MCF 10A (cell line): ENCODE measurements at regions of chr17 and their contacts with region 1.

Region 1: GRCh38 chr17:66200685-66201092 is 8.8 kb upstream of the CEP112 start:
- DNase-seq: peak; percentile 79
- H3K4me3 Mint-ChIP-seq: no peak overlapping the region
- H3K27ac Mint-ChIP-seq: no peak overlapping the region
- H3K4me1 Mint-ChIP-seq: peaks cover 6% of the 10 kb centered on the region
- H3K27me3 Mint-ChIP-seq: no peaks in the 10 kb centered on the region
- CTCF ChIP-seq: peak; percentile 64

Region 2: DNA sequence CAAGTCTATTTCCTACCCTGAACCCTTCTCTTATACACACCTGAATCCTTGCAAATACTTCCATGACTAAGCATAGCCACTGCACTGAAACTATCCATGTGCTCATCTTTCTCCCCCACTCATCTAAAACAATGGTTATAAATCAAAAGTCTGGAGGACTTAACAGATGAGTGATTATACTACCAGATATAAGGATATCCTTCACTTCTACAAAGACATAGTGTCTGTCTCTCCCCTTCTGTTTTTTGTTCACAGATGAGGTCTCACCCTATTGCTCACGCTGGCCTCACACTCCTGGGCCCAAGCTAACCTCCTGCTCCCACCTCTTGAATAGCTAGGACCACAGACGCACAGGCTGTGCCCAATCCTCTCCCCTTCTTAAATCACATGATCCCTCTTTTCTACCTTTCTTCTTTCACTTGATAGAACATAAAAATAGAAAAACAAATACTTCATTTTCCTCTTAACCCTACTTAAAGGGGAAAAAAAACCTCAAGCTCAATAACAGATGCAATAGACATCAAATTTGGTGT is 27.9 kb before region 1 on chr17:
- CTCF ChIA-PET with region 1: no interaction called
- POLR2A ChIA-PET with region 1: no interaction called
- intact Hi-C with region 1: no loop called
- DNase-seq: no peak
- H3K4me3 Mint-ChIP-seq: no peak overlapping the region
- H3K27ac Mint-ChIP-seq: no peak overlapping the region
- H3K4me1 Mint-ChIP-seq: no peaks in the 10 kb centered on the region
- H3K27me3 Mint-ChIP-seq: no peaks in the 10 kb centered on the region
- CTCF ChIP-seq: no peak

Region 3: GRCh38 chr17:66625311-66625775 is 424.7 kb after region 1 on chr17:
- CTCF ChIA-PET with region 1: interaction called, 8 read pairs
- POLR2A ChIA-PET with region 1: no interaction called
- intact Hi-C with region 1: loop called (anchors 1 kb)
- DNase-seq: peak; percentile 33
- H3K4me3 Mint-ChIP-seq: no peak overlapping the region
- H3K27ac Mint-ChIP-seq: no peak overlapping the region
- H3K4me1 Mint-ChIP-seq: no peaks in the 10 kb centered on the region
- H3K27me3 Mint-ChIP-seq: no peaks in the 10 kb centered on the region
- CTCF ChIP-seq: peak; percentile 51

Region 4: DNA sequence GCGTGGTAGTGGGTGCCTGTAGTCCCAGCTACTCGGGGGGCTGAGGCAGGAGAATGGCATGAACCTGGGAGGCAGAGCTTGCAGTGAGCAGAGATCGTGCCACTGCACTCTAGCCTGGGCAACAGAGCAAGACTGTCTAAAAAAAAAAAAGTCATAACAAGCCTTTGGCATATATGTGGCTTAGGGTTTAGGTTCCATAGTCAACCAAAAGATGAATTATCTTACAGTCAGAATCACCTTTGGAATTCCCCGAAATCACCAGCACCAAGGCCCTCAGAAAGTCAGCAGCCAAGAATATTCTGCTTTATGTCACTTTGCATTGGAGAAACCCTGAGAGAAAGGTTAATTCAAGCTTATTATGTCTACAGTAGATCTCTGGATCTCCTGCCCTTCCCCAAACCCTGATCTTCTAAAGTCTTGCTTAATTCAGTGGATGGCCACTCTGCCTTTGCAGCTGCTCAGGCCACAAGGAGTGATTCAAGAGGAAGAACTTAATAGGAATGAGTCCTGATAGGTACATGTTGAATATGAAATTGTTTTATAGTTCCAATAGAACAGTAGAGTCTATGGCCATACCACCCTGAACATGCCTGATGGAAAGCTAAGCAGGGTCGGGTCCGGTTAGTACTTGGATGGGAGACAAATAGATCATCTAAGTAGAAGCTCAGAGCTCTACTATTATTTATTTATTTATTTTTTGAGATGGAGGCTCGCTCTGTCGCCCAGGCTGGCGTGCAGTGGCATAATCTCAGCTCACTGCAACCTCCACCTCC is 438.2 kb after region 1 on chr17:
- CTCF ChIA-PET with region 1: interaction called, 10 read pairs
- POLR2A ChIA-PET with region 1: no interaction called
- intact Hi-C with region 1: no loop called
- DNase-seq: no peak
- H3K4me3 Mint-ChIP-seq: no peak overlapping the region
- H3K27ac Mint-ChIP-seq: no peak overlapping the region
- H3K4me1 Mint-ChIP-seq: peaks cover 16% of the 10 kb centered on the region
- H3K27me3 Mint-ChIP-seq: no peaks in the 10 kb centered on the region
- CTCF ChIP-seq: no peak

Region 5: GRCh38 chr17:66906321-66907278 is 705.9 kb after region 1 on chr17:
- CTCF ChIA-PET with region 1: interaction called, 6 read pairs
- POLR2A ChIA-PET with region 1: no interaction called
- intact Hi-C with region 1: loop called (anchors 2 kb)
- DNase-seq: peak; percentile 86
- H3K4me3 Mint-ChIP-seq: no peak overlapping the region
- H3K27ac Mint-ChIP-seq: no peak overlapping the region
- H3K4me1 Mint-ChIP-seq: peaks cover 19% of the 10 kb centered on the region
- H3K27me3 Mint-ChIP-seq: no peaks in the 10 kb centered on the region
- CTCF ChIP-seq: peak; percentile 88